Gastrocnemius medialis (tissue), 4 donors: ENCODE measurements at regions of chr5 and their contacts with region 1.

Region 1: GRCh38 chr5:56270568-56271392 is 37.6 kb upstream of the ANKRD55 start:
- DNase-seq: peak; percentile 37 to 58
- ATAC-seq: peak; percentile 80 to 91
- H3K4me3 ChIP-seq: no peak overlapping the region
- H3K27ac ChIP-seq: no peak overlapping the region
- H3K4me1 ChIP-seq: no peaks in the 10 kb centered on the region
- H3K27me3 ChIP-seq: no peaks in the 10 kb centered on the region
- CTCF ChIP-seq: peak; percentile 75 to 94 (median 87)
- POLR2A ChIP-seq: no peak

Region 2: GRCh38 chr5:55897905-55898304 is 372.9 kb before region 1 on chr5:
- in situ Hi-C with region 1: no loop called
- intact Hi-C with region 1: no loop called
- DNase-seq: peak in 1 of 2 donors; percentile 47
- ATAC-seq: peak; percentile 39 to 46
- H3K4me3 ChIP-seq: peak overlapping the region in 1 of 4 donors; percentile 39
- H3K27ac ChIP-seq: no peak overlapping the region
- H3K4me1 ChIP-seq: peaks cover 9 to 14% of the 10 kb centered on the region in 2 donors
- H3K27me3 ChIP-seq: no peaks in the 10 kb centered on the region
- CTCF ChIP-seq: no peak
- POLR2A ChIP-seq: no peak

Region 3: DNA sequence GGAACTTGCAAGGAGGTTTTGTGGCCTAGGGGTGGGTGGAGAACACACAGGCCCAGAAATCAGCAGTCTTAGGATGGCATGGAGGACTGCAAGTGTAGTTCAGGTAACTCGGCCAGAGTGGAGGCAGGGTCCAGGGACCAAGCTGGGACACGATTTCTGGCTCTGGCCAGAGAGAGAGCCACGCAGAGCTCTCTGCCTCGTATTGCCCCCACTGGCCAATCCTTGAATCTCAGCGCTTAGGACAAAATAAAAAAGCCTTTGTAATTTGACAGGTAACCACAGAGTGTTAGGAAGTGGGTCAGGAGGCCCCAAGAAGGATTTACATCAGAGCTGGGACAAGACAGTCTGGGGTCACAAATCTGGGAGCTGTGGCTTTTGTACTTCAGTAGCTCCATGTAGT is 556.3 kb after region 1 on chr5:
- in situ Hi-C with region 1: loop called in 1 of 4 experiments (anchors 10 kb)
- intact Hi-C with region 1: no loop called
- DNase-seq: no peak
- ATAC-seq: no peak
- H3K4me3 ChIP-seq: no peak overlapping the region
- H3K27ac ChIP-seq: no peak overlapping the region
- H3K4me1 ChIP-seq: peaks cover 38 to 41% of the 10 kb centered on the region in 2 donors
- H3K27me3 ChIP-seq: no peaks in the 10 kb centered on the region
- CTCF ChIP-seq: peak in 1 of 5 experiments; percentile 19
- POLR2A ChIP-seq: no peak

Region 4: DNA sequence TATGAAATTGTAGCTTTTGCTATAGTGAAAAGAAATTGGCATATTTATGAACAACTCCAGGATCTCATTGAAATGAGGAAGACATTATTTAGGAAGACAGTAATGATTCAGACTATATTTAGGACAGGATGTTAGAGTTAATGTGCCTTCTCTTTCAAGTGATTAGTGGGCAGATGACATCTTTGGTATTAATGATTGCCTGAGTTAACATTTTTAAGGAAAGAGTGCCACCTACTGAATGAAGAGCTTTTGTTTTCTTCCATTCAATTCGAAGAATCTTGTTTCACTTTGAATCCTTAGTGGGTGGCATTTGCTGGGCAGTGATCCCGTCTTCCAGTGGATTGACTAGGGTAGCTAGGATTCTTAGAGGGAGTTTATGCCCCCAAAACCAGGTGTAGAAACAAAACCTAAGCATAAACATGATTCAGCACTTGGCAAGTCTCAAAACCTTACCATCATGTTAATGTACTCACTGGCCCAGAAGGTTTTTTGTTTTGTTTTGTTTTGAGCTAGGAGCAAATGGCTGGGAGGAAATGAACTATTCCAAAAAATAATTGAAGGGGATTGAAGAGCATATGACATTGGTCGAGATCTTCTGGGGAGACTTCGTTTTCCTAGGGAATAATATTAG is 567.7 kb after region 1 on chr5:
- in situ Hi-C with region 1: loop called in 3 of 4 experiments (anchors 5 kb)
- intact Hi-C with region 1: loop called (anchors 2 kb)
- DNase-seq: no peak
- ATAC-seq: peak; percentile 63 to 83
- H3K4me3 ChIP-seq: peak overlapping the region in 3 of 4 donors; percentile 24 to 36 (median 33)
- H3K27ac ChIP-seq: peak overlapping the region; percentile 35 to 53 (median 45)
- H3K4me1 ChIP-seq: peaks cover 30 to 50% of the 10 kb centered on the region in 2 donors
- H3K27me3 ChIP-seq: no peaks in the 10 kb centered on the region
- CTCF ChIP-seq: peak; percentile 43 to 71 (median 58)
- POLR2A ChIP-seq: no peak

Region 5: GRCh38 chr5:57128325-57128724 is 857.5 kb after region 1 on chr5:
- in situ Hi-C with region 1: loop called in 1 of 4 experiments (anchors 25 kb)
- intact Hi-C with region 1: no loop called
- DNase-seq: no peak
- ATAC-seq: no peak
- H3K4me3 ChIP-seq: no peak overlapping the region
- H3K27ac ChIP-seq: no peak overlapping the region
- H3K4me1 ChIP-seq: no peaks in the 10 kb centered on the region
- H3K27me3 ChIP-seq: no peaks in the 10 kb centered on the region
- CTCF ChIP-seq: no peak
- POLR2A ChIP-seq: no peak